ENCODE measurements at regions of chr11 and their contacts with region 1.

Region 1: DNA sequence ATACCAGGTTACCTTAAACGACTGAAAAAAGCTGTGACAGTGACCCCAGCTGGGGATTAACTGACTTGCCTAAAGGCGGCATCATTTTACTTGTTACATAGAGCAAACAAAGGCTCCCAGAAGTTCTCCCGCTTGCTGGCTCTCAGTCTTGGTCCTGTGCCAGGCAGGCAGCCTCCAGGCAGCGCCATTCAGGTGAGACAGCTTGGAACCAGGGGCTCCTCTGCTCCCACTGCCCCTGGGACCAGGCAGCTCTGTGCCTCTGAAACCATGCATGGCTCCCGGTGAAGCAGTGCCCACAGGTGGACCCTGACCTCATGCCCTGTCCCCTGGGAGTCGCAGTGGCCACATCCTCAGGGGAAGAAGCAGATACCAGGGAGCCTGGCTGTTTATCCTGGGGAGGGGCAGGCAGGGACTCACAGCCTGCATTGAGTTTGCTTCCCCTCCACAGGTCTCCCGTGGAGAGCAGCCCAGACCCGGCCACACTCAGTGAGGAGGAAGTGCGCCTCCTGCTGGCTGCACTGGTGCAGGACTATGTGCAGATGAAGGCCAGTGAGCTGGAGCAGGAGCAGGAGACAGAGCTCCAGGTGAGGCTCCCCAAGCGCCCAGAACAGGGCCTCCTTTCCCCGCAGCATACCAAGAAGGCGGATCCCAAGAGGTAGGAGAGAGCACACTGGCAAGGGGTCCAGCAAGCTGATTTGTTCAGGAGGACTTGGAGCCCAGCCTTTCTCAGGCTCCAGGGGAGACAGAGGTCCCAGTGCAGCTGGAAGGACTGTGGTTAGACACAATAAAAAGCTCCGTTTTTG is 15.6 kb upstream of the CYP2R1 start:
- DNase-seq: peak; percentile 74 to 80
- ATAC-seq: peak; percentile 72 to 77 (median 75)
- H3K4me3 ChIP-seq: no peak overlapping the region
- H3K27ac ChIP-seq: no peak overlapping the region
- H3K4me1 ChIP-seq: no peaks in the 10 kb centered on the region
- H3K27me3 ChIP-seq: peaks cover 0 to 4% (median 0%) of the 10 kb centered on the region in 3 donors
- CTCF ChIP-seq: peak; percentile 63

Region 2: GRCh38 chr11:14537134-14537599 is 370.4 kb before region 1 on chr11:
- intact Hi-C with region 1: loop called in 1 of 2 experiments (anchors 5 kb)
- DNase-seq: no peak
- ATAC-seq: no peak
- H3K4me3 ChIP-seq: no peak overlapping the region
- H3K27ac ChIP-seq: no peak overlapping the region
- H3K4me1 ChIP-seq: no peaks in the 10 kb centered on the region
- H3K27me3 ChIP-seq: no peaks in the 10 kb centered on the region
- CTCF ChIP-seq: peak; percentile 55

Region 3: GRCh38 chr11:14789879-14790484 is 117.6 kb before region 1 on chr11:
- intact Hi-C with region 1: loop called (anchors 5 kb)
- DNase-seq: no peak
- ATAC-seq: no peak
- H3K4me3 ChIP-seq: no peak overlapping the region
- H3K27ac ChIP-seq: no peak overlapping the region
- H3K4me1 ChIP-seq: no peaks in the 10 kb centered on the region
- H3K27me3 ChIP-seq: no peaks in the 10 kb centered on the region
- CTCF ChIP-seq: peak; percentile 36

Region 4: DNA sequence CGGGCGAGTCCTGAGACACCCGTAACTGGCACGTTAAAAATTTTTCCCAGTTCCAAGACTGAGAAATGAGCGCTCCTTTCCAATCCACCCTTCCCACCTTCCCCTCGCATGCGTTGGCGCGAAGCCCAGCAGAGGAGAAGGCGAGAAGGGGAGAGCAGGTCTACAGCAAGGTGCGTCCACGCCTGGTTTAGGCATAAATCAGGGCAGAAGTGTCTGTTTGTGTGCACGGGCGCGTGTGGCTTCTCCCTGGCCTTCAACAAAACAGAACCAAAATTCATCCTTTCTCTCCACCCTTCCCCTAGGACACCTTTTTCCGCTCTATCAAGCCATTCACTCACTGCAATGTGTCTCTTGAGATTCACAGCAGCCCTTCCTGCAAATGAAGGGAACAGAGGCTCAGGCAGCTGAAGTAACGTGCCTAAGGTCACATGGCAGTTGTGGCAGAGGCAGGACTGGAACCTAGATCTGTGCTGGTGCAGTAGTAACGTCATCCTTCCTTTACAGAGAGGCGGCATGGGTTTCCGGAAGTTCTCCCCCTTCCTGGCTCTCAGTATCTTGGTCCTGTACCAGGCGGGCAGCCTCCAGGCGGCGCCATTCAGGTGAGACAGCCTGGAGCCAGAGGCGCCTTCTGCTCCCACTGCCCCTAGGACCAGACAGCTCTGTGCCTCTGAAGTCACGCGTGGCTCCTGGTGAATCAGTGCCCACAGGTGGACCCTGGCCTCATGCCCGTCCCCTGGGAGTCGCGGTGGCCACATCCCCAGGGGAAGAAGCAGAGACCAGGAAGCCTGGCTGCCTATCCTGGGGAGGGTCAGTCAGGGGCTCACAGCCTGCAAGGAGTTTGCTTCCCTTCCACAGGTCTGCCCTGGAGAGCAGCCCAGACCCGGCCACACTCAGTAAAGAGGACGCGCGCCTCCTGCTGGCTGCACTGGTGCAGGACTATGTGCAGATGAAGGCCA is 166.9 kb after region 1 on chr11:
- intact Hi-C with region 1: loop called (anchors 1 to 2 kb)
- DNase-seq: peak; percentile 77 to 87
- ATAC-seq: peak; percentile 90 to 95 (median 94)
- H3K4me3 ChIP-seq: peak overlapping the region; percentile 38
- H3K27ac ChIP-seq: no peak overlapping the region
- H3K4me1 ChIP-seq: peaks cover 9% of the 10 kb centered on the region
- H3K27me3 ChIP-seq: peaks cover 3 to 54% (median 20%) of the 10 kb centered on the region in 3 donors
- CTCF ChIP-seq: peak; percentile 82

Region 5: DNA sequence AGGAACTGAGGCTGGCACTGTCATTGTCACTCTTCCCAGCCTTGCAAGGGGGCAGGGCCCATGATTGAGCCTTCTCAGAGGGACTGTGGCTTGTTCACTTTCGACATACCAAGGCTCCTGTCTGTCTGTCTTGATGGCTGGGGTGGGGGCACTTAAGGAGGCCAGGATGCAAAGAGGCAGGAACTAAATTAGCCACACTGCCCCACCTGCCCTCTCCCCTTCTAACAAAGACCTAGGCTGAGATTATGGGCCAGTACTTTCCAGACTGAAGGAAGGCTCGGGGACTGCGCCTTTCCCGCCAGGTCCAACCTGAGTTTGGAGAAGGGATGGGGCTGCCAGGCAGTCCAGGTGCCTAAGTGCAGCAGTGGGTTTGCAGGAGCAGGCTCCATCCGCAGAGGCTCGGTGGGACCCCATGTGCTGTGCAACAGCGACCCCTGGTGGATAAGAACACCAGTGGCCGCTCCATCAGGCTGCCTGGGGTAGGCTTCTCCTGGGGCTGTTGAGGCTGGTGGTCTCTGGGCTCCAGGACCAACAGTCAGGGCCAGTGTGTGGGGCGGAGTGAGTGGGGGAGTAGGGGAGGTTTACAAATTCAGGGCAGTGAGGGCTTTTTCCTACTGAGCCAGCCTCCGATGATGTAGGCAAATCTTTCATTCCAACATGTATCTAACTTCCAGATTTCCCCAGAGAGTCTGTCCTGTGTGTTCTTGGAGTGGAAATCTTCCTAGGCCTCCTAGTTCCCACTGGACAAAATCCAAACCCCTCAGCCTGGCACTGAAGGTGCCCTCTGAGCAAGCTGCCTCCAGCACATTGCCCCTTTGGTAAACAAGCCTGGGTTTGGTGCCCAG is 301.0 kb after region 1 on chr11:
- intact Hi-C with region 1: loop called (anchors 5 to 10 kb)
- DNase-seq: peak; percentile 64 to 79
- ATAC-seq: peak; percentile 91 to 97 (median 94)
- H3K4me3 ChIP-seq: no peak overlapping the region
- H3K27ac ChIP-seq: no peak overlapping the region
- H3K4me1 ChIP-seq: no peaks in the 10 kb centered on the region
- H3K27me3 ChIP-seq: no peaks in the 10 kb centered on the region
- CTCF ChIP-seq: peak; percentile 95

Measured in psoas muscle (tissue), 8 donors.